ENCODE measurements at regions of chr3 and their contacts with region 1.

Region 1: DNA sequence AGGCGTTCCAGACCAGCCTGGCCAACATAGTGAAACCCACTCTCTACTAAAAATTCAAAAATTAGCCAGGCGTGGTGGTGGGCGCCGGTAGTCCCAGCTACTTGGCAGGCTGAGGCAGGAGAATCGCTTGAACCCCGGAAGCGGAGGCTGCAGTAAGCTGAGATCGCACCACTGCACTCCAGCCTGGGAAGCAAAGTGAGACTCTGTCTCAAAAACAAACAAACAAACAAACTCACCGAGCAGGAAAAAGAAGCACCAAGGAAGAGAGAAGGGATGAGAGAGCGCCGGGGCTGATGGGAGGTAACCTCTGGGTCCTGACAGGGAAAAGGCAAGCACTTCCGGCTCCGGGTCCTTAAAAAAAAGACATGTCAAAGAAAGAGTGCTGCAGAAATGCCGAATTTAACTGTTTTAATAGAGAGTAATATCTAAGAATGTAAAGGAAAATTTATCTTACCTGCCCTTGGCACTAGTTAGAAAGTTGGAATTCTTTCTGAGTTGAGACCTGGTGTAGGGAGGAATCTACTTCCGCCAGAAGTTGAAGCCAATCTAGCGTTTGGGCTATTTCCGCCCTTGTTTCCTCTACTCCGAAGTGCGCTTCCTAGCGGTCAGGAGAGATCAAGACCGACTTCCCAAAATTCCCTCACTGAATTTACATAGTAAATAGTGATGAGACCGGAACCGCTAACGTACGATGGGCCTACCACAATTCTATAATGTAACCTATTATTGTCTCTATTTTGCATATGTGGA is 29.1 kb downstream of the EFCAB12 start:
- DNase-seq: peak; percentile 94
- ATAC-seq: peak; percentile 86
- H3K4me3 ChIP-seq: peak overlapping the region; percentile 76 to 99 (median 89)
- H3K4me3 Mint-ChIP-seq: peak overlapping the region; percentile 96
- H3K27ac ChIP-seq: peak overlapping the region; percentile 88 to 95
- H3K27ac Mint-ChIP-seq: peak overlapping the region; percentile 94
- H3K4me1 ChIP-seq: peaks cover 20 to 22% of the 10 kb centered on the region in 2 donors
- H3K4me1 Mint-ChIP-seq: peaks cover 35% of the 10 kb centered on the region
- H3K27me3 ChIP-seq: no peaks in the 10 kb centered on the region
- H3K27me3 Mint-ChIP-seq: no peaks in the 10 kb centered on the region
- CTCF ChIP-seq: peak; percentile 90

Region 2: GRCh38 chr3:128867200-128868125 is 531.9 kb before region 1 on chr3:
- CTCF ChIA-PET with region 1: no interaction called
- POLR2A ChIA-PET with region 1: no interaction called
- intact Hi-C with region 1: no loop called
- DNase-seq: no peak
- ATAC-seq: no peak
- H3K4me3 ChIP-seq: no peak overlapping the region
- H3K4me3 Mint-ChIP-seq: no peak overlapping the region
- H3K27ac ChIP-seq: no peak overlapping the region
- H3K27ac Mint-ChIP-seq: no peak overlapping the region
- H3K4me1 ChIP-seq: no peaks in the 10 kb centered on the region
- H3K4me1 Mint-ChIP-seq: no peaks in the 10 kb centered on the region
- H3K27me3 ChIP-seq: no peaks in the 10 kb centered on the region
- H3K27me3 Mint-ChIP-seq: no peaks in the 10 kb centered on the region
- CTCF ChIP-seq: no peak

Region 3: GRCh38 chr3:129365296-129366136 is 33.8 kb before region 1 on chr3:
- CTCF ChIA-PET with region 1: no interaction called
- POLR2A ChIA-PET with region 1: no interaction called
- intact Hi-C with region 1: no loop called
- DNase-seq: no peak
- ATAC-seq: no peak
- H3K4me3 ChIP-seq: no peak overlapping the region
- H3K4me3 Mint-ChIP-seq: no peak overlapping the region
- H3K27ac ChIP-seq: no peak overlapping the region
- H3K27ac Mint-ChIP-seq: no peak overlapping the region
- H3K4me1 ChIP-seq: no peaks in the 10 kb centered on the region
- H3K4me1 Mint-ChIP-seq: peaks cover 2% of the 10 kb centered on the region
- H3K27me3 ChIP-seq: no peaks in the 10 kb centered on the region
- H3K27me3 Mint-ChIP-seq: peaks cover 3% of the 10 kb centered on the region
- CTCF ChIP-seq: no peak

Region 4: DNA sequence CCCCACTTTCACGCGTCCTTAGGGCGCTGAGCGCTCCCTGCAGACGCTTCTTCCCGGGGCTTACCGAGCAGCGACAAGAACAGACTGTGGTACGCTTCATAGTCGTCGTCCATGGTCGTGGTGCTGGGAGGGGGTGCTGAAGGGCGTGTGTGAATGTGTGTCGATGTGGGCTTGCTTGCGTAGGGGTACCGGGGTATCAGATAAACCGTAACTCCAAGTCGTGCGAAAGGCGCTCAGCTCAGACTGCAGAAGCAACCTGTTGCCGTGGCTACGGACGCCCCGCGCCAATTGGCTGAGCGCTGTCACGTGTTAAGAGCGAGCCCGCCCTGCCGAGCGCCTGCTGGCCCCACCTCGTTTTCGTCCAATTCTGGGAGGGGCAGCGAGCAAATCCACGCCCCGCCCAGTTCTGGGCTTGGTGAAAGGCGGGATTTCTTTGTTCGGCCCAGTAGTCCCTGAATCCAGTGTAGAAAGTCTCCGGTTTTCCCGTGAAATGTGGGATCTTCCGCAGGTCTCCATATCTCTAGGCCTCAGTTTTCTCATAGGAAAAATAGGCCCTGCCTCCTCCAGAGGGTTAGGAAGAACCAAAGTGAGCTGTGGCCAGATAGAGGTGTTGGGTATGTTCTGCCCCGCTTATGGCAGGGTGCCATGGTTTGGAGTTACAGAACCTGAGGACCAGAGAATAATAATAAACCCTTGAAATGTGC is 29.2 kb after region 1 on chr3 and contains the start of gene EFCAB12:
- CTCF ChIA-PET with region 1: interaction called, 5 read pairs
- POLR2A ChIA-PET with region 1: no interaction called
- intact Hi-C with region 1: loop called (anchors 1 kb)
- DNase-seq: peak; percentile 91
- ATAC-seq: peak; percentile 89
- H3K4me3 ChIP-seq: peak within 1 kb of the TSS; percentile 22 to 68 (median 53)
- H3K4me3 Mint-ChIP-seq: peak within 1 kb of the TSS; percentile 90
- H3K27ac ChIP-seq: peak within 1 kb of the TSS; percentile 2 to 63
- H3K27ac Mint-ChIP-seq: peak within 1 kb of the TSS; percentile 88
- H3K4me1 ChIP-seq: peaks cover 45 to 62% of the 10 kb centered on the region in 2 donors
- H3K4me1 Mint-ChIP-seq: peaks cover 68% of the 10 kb centered on the region
- H3K27me3 ChIP-seq: no peaks in the 10 kb centered on the region
- H3K27me3 Mint-ChIP-seq: no peaks in the 10 kb centered on the region
- CTCF ChIP-seq: no peak
- total RNA-seq, gene EFCAB12: 6.2 and 6.5 TPM in 2 replicates